ENCODE measurements at regions of chr9 and their contacts with region 1.

Region 1: GRCh38 chr9:14868772-14869583 is 41.2 kb downstream of the FREM1 start:
- DNase-seq: no peak
- ATAC-seq: peak in 1 of 4 donors; percentile 36
- H3K4me3 ChIP-seq: no peak overlapping the region
- H3K27ac ChIP-seq: peak overlapping the region in 1 of 12 donors; percentile 71
- H3K4me1 ChIP-seq: no peaks in the 10 kb centered on the region
- H3K27me3 ChIP-seq: no peaks in the 10 kb centered on the region
- CTCF ChIP-seq: no peak
- POLR2A ChIP-seq: no peak

Region 2: DNA sequence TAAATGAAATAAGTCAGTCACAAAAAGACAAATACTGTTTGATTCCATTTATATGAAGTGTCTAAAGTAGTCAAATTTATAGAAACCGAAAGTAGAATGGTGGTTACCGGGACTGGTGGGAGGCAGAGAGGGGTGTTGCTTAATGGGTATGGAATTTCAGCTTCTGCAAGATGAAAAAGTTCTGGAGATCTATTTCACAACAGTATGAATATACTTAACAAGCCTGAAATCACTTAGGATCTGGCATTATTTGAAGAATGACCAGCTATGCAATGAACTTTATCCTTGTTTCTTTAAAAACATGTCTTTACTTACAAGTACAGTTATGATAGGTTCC is 55.9 kb after region 1 on chr9:
- intact Hi-C with region 1: loop called in 1 of 10 experiments (anchors 10 kb)
- DNase-seq: no peak
- ATAC-seq: peak in 3 of 4 donors; percentile 32 to 64 (median 46)
- H3K4me3 ChIP-seq: peak overlapping the region in 5 of 12 donors; percentile 2 to 33 (median 27)
- H3K27ac ChIP-seq: peak overlapping the region in 1 of 12 donors; percentile 38
- H3K4me1 ChIP-seq: no peaks in the 10 kb centered on the region
- H3K27me3 ChIP-seq: no peaks in the 10 kb centered on the region
- CTCF ChIP-seq: no peak
- POLR2A ChIP-seq: no peak